Ascending aorta (tissue), 2 donors: ENCODE measurements at regions of chr12 and their contacts with region 1.

Region 1: DNA sequence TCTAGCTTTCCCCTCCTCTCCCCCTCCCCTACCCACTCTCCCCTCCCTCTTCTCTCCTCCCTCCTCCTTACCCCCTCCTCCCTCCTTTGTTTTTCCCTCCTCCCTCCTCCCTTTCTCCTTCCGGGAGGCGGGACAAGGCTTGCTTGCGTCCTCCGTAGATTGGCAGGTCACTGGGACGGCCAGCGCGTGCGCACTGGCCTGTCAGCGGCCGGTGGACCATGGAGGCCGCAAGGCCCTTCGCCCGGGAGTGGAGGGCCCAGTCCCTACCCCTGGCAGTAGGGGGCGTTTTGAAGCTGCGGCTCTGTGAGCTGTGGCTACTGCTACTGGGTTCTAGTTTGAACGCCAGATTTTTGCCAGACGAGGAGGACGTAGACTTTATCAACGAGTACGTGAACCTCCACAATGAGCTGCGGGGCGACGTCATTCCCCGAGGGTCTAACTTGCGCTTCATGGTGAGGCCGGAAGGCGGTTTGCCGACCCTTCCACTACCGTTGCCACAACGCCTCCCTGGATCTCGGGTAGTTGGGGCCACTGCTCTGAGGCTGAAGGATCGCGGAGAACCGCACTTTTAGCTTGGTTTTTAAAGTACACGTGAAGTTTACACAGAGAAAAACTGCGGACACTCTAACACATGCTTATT is at the start of gene GLIPR1L2:
- DNase-seq: peak; percentile 89 to 98
- H3K4me3 ChIP-seq: peak within 1 kb of the TSS; percentile 63 to 76
- H3K27ac ChIP-seq: peak within 1 kb of the TSS; percentile 95 to 97
- H3K4me1 ChIP-seq: peaks cover 0 to 8% of the 10 kb centered on the region in 2 donors
- H3K27me3 ChIP-seq: no peaks in the 10 kb centered on the region
- CTCF ChIP-seq: peak; percentile 76 to 84 (median 79)
- total RNA-seq, gene GLIPR1L2: not detected

Region 2: DNA sequence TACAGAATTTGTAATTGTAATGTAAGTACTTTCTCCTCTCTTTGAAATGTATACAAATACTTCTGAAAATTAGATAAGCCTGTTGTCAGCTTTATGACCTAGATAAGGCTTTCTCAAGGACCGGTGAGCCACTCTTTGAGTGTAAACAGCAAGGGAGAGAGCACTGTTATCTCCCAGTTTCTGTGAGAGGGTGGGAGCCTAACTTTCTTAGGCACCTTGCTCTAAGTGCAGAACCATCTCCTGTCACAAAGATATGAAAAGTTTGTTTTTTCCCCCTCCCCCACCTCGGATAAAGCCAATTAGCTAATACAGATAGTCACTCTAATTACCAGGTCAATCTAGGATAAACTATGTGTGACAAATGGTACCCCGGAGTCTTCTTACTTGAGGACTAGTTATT is 96.7 kb before region 1 on chr12:
- intact Hi-C with region 1: no loop called
- DNase-seq: no peak
- H3K4me3 ChIP-seq: no peak overlapping the region
- H3K27ac ChIP-seq: no peak overlapping the region
- H3K4me1 ChIP-seq: no peaks in the 10 kb centered on the region
- H3K27me3 ChIP-seq: no peaks in the 10 kb centered on the region
- CTCF ChIP-seq: no peak

Region 3: DNA sequence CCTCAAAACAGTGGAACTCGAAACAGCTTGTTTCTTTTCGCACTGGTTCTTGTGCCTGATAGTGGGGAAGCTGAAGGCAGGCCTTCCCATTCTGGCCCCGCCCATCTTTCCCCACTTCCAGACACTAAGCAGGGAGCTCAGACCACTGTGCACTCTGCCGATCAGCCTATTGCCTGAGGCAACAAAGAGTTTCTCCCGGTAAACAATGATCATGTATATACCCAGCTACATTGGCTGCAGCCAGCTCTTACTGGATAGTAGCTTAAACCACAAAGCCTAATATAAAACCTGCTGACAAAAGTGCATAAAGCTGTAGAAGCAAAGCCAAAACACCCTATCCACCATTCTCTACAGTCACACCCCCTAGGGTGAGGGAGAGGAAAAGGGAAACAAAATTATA is 64.8 kb after region 1 on chr12:
- intact Hi-C with region 1: no loop called
- DNase-seq: no peak
- H3K4me3 ChIP-seq: no peak overlapping the region
- H3K27ac ChIP-seq: no peak overlapping the region
- H3K4me1 ChIP-seq: no peaks in the 10 kb centered on the region
- H3K27me3 ChIP-seq: no peaks in the 10 kb centered on the region
- CTCF ChIP-seq: no peak

Region 4: DNA sequence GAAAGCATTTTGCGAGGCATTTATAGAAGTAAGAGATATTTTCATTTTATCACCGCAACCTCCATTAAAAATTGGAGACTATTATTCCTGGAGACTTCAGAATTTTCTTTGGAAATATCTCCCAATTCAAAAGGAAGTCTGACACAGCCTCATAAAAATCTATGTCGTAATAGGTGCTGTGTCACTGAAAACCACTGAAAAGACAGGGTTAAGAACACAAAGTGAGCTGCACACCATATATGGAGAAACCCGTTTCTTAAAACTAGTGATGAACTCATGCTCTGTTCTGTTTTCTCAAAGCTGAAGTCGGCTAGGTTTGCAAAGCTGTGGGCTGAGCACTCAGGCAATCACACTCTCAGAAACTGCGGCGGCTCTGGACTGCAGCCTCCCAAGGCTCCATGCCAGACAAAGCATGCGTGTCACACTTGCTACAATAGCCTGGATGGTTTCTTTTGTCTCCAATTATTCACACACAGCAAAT is 89.5 kb after region 1 on chr12 and contains the start of gene GLIPR1:
- intact Hi-C with region 1: loop called (anchors 1 kb)
- DNase-seq: peak; percentile 52 to 94
- H3K4me3 ChIP-seq: peak within 1 kb of the TSS; percentile 66 to 75
- H3K27ac ChIP-seq: peak within 1 kb of the TSS; percentile 88 to 90
- H3K4me1 ChIP-seq: peaks cover 5 to 14% of the 10 kb centered on the region in 2 donors
- H3K27me3 ChIP-seq: no peaks in the 10 kb centered on the region
- CTCF ChIP-seq: no peak
- total RNA-seq, gene GLIPR1: 43.9 TPM

Region 5: GRCh38 chr12:75511116-75512048 is 120.4 kb after region 1 on chr12 and contains the start of gene KRR1:
- intact Hi-C with region 1: loop called (anchors 2 kb)
- DNase-seq: peak; percentile 68 to 96
- H3K4me3 ChIP-seq: peak within 1 kb of the TSS; percentile 87 to 90
- H3K27ac ChIP-seq: peak within 1 kb of the TSS; percentile 73 to 81
- H3K4me1 ChIP-seq: peaks cover 3 to 12% of the 10 kb centered on the region in 2 donors
- H3K27me3 ChIP-seq: no peaks in the 10 kb centered on the region
- CTCF ChIP-seq: no peak
- total RNA-seq, gene KRR1: 23.9 TPM

Region 6: GRCh38 chr12:75814851-75815754 is 424.1 kb after region 1 on chr12:
- intact Hi-C with region 1: loop called (anchors 10 kb)
- DNase-seq: peak in 1 of 2 donors; percentile 71
- H3K4me3 ChIP-seq: no peak overlapping the region
- H3K27ac ChIP-seq: peak overlapping the region in 1 of 2 donors; percentile 61
- H3K4me1 ChIP-seq: peaks cover 0 to 2% of the 10 kb centered on the region in 2 donors
- H3K27me3 ChIP-seq: no peaks in the 10 kb centered on the region
- CTCF ChIP-seq: no peak

Region 7: GRCh38 chr12:76031537-76032073 is 640.6 kb after region 1 on chr12 and contains the start of gene PHLDA1:
- intact Hi-C with region 1: loop called (anchors 2 kb)
- DNase-seq: peak; percentile 69 to 97
- H3K4me3 ChIP-seq: peak within 1 kb of the TSS; percentile 58 to 80
- H3K27ac ChIP-seq: peak within 1 kb of the TSS; percentile 95
- H3K4me1 ChIP-seq: no peaks in the 10 kb centered on the region
- H3K27me3 ChIP-seq: no peaks in the 10 kb centered on the region
- CTCF ChIP-seq: peak; percentile 64 to 74 (median 69)
- total RNA-seq, gene PHLDA1: 11.8 TPM

Region 8: GRCh38 chr12:77065361-77066204 is 1674.6 kb after region 1 on chr12 and contains the start of gene E2F7:
- intact Hi-C with region 1: loop called (anchors 10 kb)
- DNase-seq: peak; percentile 35 to 91
- H3K4me3 ChIP-seq: peak within 1 kb of the TSS; percentile 65 to 71
- H3K27ac ChIP-seq: peak within 1 kb of the TSS; percentile 6 to 16
- H3K4me1 ChIP-seq: peaks cover 0 to 6% of the 10 kb centered on the region in 2 donors
- H3K27me3 ChIP-seq: no peaks in the 10 kb centered on the region
- CTCF ChIP-seq: no peak
- total RNA-seq, gene E2F7: not detected